Mammary epithelial cell (primary cell): ENCODE measurements at regions of chr6 and their contacts with region 1.

Region 1: DNA sequence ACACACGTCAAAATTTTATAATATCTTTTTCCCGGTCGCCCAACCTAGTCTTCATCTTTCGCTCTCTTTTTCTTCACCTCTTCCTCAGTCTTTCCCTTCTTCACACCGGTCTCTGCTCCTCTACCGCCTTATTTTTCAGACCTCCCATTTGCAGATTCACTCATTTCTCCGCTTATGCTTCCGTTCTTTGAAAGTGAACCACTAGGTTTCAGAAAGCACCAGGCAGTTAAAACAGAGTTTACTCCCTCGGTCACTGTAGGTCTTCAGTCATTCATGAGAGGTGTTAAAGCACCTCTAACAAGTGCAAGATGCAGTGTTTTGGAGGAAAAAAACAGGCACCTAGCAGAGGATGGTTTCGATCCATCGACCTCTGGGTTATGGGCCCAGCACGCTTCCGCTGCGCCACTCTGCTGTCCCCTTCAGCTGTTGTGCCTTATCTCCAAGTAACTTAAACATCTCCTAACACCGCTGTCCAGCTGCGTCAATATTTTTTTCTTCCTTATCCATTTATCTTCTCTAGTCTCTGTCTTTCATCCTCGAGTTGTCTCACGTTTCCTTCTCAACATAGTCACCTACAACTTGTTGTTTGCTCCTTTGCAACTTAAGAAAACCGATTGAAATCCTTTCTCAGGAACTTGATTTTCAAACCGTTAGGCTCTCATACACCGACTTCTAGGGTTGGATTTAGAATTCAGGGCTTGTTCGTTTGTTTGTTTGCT is 119.7 kb upstream of the ZNF184 start:
- DNase-seq: peak; percentile 84
- H3K4me3 ChIP-seq: peak overlapping the region; percentile 43 to 62 (median 48)
- H3K27ac ChIP-seq: no peak overlapping the region
- H3K4me1 ChIP-seq: peaks cover 13% of the 10 kb centered on the region
- H3K27me3 ChIP-seq: no peaks in the 10 kb centered on the region
- CTCF ChIP-seq: no peak

Region 2: GRCh38 chr6:27553123-27553904 is 39.3 kb before region 1 on chr6:
- CTCF ChIA-PET with region 1: no interaction called
- dilution Hi-C with region 1: no loop called
- in situ Hi-C with region 1: no loop called
- intact Hi-C with region 1: loop called (anchors 2 kb)
- DNase-seq: peak; percentile 80
- H3K4me3 ChIP-seq: peak overlapping the region; percentile 24 to 42 (median 38)
- H3K27ac ChIP-seq: no peak overlapping the region
- H3K4me1 ChIP-seq: no peaks in the 10 kb centered on the region
- H3K27me3 ChIP-seq: no peaks in the 10 kb centered on the region
- CTCF ChIP-seq: no peak